Right ventricle myocardium inferior (tissue), 1 donor: ENCODE measurements at regions of chr16 and their contacts with region 1.

Region 1: GRCh38 chr16:23182460-23183309 is at the start of gene SCNN1G:
- DNase-seq: peak; percentile 86
- ATAC-seq: peak; percentile 94
- total RNA-seq, gene SCNN1G: 0.30 TPM

Region 2: GRCh38 chr16:23072084-23072599 is 110.5 kb before region 1 on chr16:
- intact Hi-C with region 1: no loop called
- DNase-seq: peak; percentile 92
- ATAC-seq: peak; percentile 79

Region 3: DNA sequence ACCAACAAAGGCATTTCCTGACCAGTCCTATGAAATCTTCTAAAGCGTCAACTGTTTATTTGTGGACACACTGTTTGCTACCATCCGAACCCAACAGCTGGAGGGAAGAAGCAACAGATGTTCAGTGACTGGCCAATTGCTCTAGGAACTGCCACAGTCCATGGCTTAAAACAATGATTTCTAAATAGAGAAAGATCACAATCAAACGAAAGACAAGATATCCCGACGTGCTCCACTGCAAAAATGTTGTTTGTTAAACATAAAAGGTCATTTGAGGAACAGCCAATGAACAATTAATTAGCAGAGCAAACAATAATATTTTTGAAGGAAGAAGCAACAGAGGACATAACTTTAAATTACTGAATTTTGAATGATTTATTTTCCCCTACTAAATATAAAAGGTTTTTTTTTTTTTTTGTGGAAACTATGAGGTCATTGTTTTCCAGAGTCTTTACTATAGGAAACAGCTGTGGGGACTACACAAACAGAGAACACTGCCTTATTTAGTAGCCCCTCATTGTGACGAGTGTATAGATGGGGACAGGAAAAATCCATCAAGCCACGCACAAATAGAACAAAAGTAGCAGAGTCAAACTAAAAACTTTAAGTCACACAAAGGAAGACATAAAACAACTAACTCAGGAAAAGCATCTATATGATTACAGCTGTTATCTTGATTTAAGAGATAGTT is 50.6 kb before region 1 on chr16:
- intact Hi-C with region 1: no loop called
- DNase-seq: no peak
- ATAC-seq: no peak

Region 4: DNA sequence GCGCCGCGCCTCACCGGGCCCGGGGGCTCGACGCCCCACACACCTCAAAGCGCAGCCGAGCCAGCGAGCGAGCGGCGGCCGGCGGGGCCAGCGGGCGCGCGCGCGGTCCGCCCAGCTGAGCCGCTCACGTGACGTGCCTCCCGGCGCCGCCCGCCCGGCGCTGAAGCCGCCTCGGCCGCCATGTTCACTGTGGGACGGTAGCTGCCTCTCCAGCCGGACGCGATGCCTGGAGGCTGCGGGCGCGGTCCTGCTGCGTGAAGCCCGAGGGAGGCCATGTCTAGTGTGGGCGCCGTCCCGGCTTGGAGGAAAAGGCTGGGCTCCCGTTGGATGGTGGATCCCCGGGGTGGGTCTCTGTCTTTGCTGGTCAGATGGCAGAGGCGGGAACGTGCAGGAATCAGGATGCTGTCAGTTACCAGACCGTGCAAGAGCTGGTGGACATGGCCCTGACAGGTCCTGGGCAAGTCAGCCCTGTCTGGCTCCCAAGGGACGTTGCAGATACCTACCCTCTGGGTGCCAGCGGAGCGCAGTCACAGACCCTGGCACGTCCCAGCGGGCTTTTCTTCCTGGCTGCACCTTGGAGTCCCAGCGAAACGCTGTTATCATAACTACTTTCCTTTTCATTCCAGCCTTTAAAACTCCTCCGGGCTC is 33.2 kb before region 1 on chr16 and contains the start of gene USP31:
- intact Hi-C with region 1: no loop called
- DNase-seq: peak; percentile 98
- ATAC-seq: peak; percentile 98
- total RNA-seq, gene USP31: 26.8 TPM

Region 5: GRCh38 chr16:23232806-23233205 is 50.1 kb after region 1 on chr16:
- intact Hi-C with region 1: no loop called
- DNase-seq: no peak
- ATAC-seq: no peak

Region 6: GRCh38 chr16:23244122-23244521 is 61.4 kb after region 1 on chr16:
- intact Hi-C with region 1: loop called (anchors 5 kb)
- DNase-seq: no peak
- ATAC-seq: no peak

Region 7: DNA sequence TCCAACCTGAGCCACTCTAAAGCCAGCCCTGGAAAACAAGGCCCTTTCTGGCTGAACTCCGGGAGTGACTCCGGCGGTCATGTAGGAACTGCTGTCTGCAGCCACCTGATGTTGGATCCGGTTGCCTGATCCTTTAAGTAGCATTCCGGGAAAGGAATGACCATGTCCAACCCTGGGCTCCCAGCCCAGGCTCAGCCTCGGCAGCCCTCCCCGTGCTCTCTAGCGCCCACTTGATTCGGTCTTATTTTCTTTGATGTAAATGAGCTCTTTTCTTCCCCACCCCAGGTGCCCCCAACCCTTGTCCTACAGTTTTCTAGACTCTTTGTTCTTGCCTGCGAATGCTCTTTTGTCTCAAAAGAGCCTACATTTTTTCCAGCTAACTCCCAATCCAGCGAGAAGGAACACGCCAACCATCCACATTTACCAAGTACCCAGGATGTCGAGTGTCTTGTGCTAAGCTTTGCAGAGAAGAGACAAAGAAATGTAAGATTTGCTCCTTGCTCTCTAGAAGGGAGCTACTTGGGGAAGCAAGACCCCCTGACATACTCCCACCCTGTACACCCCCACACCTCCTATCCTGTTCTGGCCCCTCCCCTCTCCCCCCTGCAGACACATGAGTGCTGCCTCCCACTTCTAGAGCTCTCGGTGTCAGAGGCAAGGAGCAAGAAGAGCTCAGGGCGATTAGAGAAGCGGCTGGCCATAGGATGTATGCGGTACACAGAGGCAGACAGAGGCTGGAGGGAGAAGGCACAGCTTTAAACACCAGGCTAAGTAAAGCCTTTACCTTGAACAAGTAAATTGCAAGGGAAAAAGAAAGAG is 216.5 kb after region 1 on chr16:
- intact Hi-C with region 1: loop called (anchors 2 kb)
- DNase-seq: no peak
- ATAC-seq: peak; percentile 82

Region 8: GRCh38 chr16:23435500-23435899 is 252.8 kb after region 1 on chr16:
- intact Hi-C with region 1: loop called (anchors 1 kb)
- DNase-seq: no peak
- ATAC-seq: peak; percentile 66